Dorsolateral prefrontal cortex (tissue), 120 donors: ENCODE measurements at regions of chr1 and their contacts with region 1.

Region 1: GRCh38 chr1:88983791-88984559 is 8.5 kb downstream of the KYAT3 start:
- DNase-seq: no peak
- H3K4me3 ChIP-seq: peak overlapping the region in 50 of 59 donors; percentile 1 to 59 (median 30)
- H3K27ac ChIP-seq: peak overlapping the region; percentile 12 to 91 (median 80)
- H3K27me3 ChIP-seq: no peaks in the 10 kb centered on the region
- CTCF ChIP-seq: peak; percentile 51 to 87 (median 74)

Region 2: DNA sequence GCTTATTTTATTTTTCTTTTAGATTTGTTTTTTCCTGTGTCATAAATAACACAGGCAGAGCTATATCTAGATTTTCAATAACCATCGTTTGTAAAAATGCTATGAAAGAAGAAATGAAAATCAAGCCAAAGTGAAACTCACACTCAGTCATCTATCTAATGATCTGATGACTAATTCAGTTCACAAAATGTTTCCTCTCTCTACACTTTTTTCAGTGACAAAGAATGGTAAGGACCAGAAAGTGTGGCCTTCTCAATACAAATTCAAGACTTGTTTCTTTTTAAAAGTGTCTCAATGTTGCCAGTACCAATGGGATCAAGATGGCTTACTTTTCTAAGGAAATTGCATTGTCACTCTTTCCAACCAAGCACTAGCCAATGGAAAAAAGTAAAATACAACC is 582.7 kb before region 1 on chr1:
- intact Hi-C with region 1: no loop called
- DNase-seq: no peak
- H3K4me3 ChIP-seq: no peak overlapping the region
- H3K27ac ChIP-seq: no peak overlapping the region
- H3K27me3 ChIP-seq: no peaks in the 10 kb centered on the region
- CTCF ChIP-seq: no peak

Region 3: GRCh38 chr1:89358287-89358893 is 374.4 kb after region 1 on chr1:
- intact Hi-C with region 1: loop called in 1 of 2 experiments (anchors 2 kb)
- DNase-seq: peak; percentile 35 to 76 (median 58)
- H3K4me3 ChIP-seq: no peak overlapping the region
- H3K27ac ChIP-seq: peak overlapping the region in 1 of 59 donors; percentile 12
- H3K27me3 ChIP-seq: no peaks in the 10 kb centered on the region
- CTCF ChIP-seq: peak; percentile 37 to 90 (median 79)

Region 4: DNA sequence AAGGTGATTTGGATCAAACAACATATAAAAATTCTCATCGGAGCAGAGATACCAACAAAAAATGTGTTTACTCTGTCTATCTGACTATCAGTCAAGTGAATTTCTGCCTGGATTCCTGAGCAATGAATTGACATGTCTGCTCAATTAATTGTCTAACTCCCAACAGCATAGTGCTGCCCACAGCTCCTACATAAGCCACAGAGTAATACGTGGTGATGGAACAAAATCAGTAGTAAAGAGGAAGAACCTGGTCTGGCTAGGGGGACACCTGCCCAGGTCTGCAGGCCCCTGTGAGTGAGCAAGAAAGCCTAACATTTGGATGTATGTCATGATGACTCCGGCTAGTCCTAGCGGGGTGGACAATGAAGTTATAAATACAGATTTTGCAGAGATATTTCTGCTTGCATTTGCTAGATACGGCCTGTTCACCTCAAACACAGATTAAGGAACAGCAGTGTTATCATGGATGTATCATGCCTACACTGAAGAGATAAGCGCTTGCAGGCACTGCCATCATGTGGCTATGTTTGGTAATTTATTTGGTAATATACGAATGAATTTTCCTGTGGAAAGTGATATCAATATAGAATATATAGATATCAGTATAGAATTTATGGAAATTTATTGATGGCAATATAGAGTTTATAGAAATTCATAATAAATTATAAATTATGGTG is 471.0 kb after region 1 on chr1:
- intact Hi-C with region 1: loop called in 1 of 2 experiments (anchors 5 kb)
- DNase-seq: peak in 6 of 10 donors; percentile 15 to 62 (median 42)
- H3K4me3 ChIP-seq: no peak overlapping the region
- H3K27ac ChIP-seq: no peak overlapping the region
- H3K27me3 ChIP-seq: no peaks in the 10 kb centered on the region
- CTCF ChIP-seq: peak in 55 of 56 donors; percentile 57 to 89 (median 74)